Posterior vena cava (tissue), 2 donors: ENCODE measurements at regions of chr20 and their contacts with region 1.

Region 1: DNA sequence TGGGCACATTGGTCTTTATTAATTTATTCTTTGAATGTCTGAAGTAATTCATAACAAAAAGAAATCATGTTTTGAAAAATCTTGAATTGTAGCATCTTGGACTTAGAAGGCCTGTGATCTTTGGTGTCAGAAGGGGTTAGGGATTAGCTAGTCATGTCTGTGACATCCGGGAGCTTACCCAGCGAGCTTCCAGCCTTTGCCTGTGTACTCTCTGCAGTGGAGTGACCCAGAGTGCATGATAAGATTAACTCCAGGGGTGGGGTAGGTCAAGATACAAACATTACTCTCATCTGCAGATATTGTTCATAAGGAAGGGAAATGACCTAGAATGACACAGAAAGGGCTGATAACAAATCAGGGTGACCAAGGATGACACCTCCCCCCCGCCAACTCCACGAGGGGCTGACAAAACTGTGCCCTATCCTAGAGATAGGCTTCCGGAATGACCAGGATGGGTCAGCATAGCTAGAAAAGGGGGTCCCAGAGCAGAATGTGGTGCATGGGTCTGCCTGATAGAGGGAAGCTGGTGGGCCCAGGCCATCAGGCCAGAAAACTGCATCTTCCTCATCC is 56.6 kb upstream of the BLCAP start:
- DNase-seq: no peak

Region 2: DNA sequence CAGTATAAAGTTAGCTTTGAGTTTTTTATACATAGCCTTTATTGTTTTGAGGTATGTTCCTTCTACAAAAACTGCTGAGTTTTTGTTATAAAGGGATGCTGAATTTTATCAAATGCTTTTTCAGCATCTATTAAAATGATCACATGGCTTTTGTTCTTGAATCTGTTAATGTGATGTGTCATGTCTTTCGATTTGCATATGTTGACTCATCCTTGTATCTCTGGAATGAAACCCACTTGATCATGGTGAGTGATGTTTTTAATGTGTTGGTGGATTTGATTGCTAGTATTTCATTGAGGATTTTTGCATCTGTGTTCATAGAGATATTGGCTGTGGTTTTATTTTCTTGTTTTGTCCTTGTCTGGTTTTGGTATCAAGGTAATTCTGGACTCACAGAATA is 31.9 kb before region 1 on chr20:
- intact Hi-C with region 1: loop called in 1 of 2 experiments (anchors 1 kb)
- DNase-seq: no peak

Region 3: DNA sequence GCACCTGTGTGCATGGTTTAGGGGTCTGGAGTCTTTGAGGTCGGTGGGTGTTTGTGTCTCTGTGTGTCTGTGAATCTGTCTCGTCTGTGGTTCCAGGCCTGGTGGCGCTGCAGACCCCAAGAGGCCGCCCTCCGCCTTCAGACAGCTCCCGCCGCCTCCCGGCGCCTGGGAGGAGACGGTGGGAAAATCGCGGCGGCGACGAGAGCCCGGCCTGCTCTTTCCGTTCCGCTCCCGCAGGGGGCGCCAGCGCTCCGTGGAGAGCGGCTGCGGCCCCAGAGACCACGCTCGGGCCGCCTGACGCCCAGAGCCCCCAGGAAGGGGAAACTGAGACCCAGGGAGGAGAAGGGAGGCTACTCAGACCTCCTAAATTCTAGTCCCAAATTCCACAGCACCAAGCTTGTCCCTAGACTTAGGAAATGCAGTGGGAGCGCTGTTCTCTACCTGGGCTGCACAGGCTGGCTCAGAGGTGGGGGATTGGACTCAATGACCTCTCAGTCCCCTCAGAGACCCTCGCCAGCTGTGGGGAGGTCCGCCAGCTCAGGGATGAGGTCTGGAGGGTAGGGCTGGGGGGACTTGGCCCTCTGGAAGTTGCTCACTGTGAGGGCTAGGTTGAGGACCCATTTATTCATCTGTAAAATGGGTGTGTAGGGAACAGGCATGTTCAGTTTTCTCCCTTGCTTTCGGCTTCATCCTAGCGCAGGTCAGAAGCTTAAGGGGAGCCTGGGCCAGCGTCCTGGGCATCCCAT is 19.8 kb before region 1 on chr20:
- intact Hi-C with region 1: no loop called
- DNase-seq: peak; percentile 88

Region 4: DNA sequence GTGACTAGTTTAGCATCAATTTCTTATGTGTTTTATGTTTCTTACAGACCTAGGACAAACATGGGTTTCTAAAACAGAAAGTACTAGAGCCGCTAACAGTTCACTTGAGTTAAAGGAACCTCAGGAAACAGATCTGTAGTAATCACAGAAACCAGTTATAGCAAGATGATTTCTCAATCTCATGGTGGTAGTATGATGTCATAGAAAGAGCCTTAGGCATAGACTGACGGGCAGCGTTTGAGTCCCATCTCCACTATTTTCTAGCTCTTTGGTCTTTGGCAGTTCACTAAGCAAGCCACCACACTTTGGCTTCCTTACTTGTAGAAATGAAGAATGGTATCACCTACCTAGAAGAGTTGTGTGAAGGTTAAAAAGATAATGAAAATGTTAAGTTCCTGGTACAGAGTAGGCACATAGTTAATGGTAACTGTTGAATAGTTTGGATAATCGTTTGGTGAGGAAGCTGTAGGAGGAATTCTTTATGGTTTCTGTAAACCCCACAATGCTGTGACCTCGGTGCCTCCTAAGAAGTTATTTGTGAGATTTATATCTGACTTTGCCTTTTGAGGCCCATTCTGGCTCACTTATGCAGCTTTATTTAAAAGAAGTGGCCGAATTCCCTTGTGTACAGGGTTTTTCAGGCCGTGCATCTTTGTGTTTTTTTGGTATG is 130.8 kb after region 1 on chr20:
- intact Hi-C with region 1: no loop called
- DNase-seq: no peak

Region 5: DNA sequence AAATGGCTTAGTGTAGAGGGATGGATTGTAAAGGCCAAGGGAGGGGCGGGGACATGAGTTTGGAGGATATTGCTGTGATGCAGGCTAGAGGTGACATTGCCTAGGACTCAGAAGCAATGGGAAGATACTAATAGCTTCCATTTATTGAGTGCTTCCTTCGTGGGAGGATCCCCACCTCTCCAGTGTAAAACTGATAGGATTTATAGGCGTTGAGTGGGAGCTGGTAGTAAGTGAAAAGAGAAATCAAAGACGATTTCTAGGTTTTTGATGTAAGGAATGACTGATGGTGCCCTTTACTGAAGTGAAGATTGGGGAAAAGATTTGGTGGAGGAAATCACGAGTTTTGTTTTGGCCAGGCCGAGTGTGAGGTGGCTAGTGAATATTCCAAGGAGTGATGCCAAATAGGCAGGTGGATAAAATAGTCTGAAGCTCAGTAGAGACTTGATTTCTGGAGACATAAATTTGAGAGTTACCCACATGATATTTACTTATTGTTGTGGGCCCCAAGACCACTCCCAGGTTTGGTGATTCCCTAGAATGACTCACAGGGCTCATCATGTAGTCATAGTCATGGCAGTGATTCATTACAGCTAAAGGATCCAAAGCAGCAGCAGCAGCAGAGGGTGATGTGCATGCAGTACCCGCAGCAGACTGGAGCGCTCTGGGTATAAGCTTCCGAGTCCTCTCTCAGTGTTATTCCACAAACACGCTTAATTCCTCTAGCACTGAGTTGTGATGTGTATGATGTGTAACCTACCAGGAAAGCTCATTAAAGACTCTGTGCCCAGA is 459.4 kb after region 1 on chr20:
- intact Hi-C with region 1: no loop called
- DNase-seq: no peak